HepG2 (cell line): ENCODE measurements at regions of chr16 and their contacts with region 1.

Region 1: GRCh38 chr16:69150146-69150865 is 17.9 kb downstream of the UTP4 start:
- DNase-seq: peak; percentile 68
- ATAC-seq: peak; percentile 91
- H3K4me3 ChIP-seq: no peak overlapping the region
- H3K27ac ChIP-seq: no peak overlapping the region
- H3K4me1 ChIP-seq: no peaks in the 10 kb centered on the region
- H3K27me3 ChIP-seq: no peaks in the 10 kb centered on the region
- CTCF ChIP-seq: peak; percentile 84
- EP300 ChIP-seq: no peak
- POLR2A ChIP-seq: no peak
- RAD21 ChIP-seq: peak; percentile 72; the same call in 1 of the 2 replicates

Region 2: DNA sequence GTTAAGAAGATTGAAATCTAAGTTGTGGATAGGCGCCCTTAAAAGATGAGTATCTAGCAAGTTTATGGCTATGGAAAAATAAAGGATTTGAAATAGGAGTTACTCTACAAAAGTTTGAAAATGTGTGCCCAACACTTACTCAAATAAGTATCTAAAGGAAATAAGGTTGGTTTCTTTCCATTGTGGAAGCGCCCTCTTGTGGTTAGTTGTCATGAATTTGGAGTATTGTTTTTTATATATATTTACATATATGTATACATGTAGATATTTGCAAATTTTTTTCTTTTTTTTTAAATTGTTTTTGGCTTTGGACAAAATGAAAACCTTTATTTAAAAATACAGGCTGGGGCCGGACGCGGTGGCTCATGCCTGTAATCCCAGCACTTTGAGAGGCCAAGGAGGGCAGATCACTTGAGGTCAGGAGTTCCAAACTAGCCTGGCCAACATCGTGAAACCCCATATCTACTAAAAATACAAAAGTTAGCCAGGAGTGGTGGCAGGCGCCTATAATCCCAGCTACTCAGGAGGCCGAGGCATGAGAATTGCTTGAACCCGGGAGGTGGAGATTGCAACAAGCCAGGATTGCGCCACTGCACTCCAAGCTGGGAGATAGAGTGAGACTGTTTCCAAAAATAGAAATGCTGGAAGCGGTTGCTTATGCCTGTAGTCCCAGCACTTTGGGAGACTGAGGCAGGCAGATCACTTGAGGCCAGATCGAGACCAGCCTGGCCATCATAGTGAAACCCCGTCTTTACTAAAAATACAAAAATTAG is 136.8 kb after region 1 on chr16:
- CTCF ChIA-PET with region 1: interaction called, 44 read pairs
- POLR2A ChIA-PET with region 1: interaction called, 3 read pairs
- in situ Hi-C with region 1: loop called (anchors 5 kb)
- intact Hi-C with region 1: loop called (anchors 1 kb)
- DNase-seq: peak; percentile 62
- ATAC-seq: no peak
- H3K4me3 ChIP-seq: no peak overlapping the region
- H3K27ac ChIP-seq: no peak overlapping the region
- H3K4me1 ChIP-seq: peaks cover 8% of the 10 kb centered on the region; the same call in 1 of the 2 replicates
- H3K27me3 ChIP-seq: no peaks in the 10 kb centered on the region
- CTCF ChIP-seq: peak; percentile 55
- EP300 ChIP-seq: no peak
- POLR2A ChIP-seq: no peak
- RAD21 ChIP-seq: peak; percentile 29; the same call in 1 of the 2 replicates